ENCODE measurements at regions of chr13 and their contacts with region 1.

Region 1: GRCh38 chr13:108155185-108156106 is 59.9 kb downstream of the LIG4 start:
- DNase-seq: peak in 2 of 3 donors; percentile 40 to 61
- ATAC-seq: peak; percentile 61 to 77 (median 72)
- H3K4me3 ChIP-seq: no peak overlapping the region
- H3K27ac ChIP-seq: peak overlapping the region in 2 of 3 donors; percentile 7 to 61
- H3K4me1 ChIP-seq: peaks cover 0 to 16% (median 5%) of the 10 kb centered on the region in 4 donors
- H3K27me3 ChIP-seq: no peaks in the 10 kb centered on the region
- CTCF ChIP-seq: peak; percentile 83 to 93 (median 87)
- POLR2A ChIP-seq: no peak

Region 2: DNA sequence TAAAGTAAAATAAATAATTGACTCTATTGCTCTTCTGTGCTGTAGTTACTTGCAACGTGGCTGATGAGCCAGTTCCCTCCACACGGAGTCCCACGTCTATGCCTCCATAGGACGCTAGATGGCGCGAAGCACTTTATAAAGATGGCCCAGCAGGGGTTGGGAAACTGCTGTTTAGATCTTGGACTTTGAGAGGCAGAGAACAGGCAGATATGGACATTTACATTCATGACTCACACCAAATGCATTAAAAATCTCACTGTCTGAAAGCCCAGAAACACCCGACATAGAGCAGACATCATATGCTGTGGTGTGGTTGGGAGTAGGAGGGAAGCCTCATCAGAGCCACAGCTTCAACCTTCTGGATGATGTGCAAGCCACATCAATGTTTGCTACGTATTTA is 944.4 kb before region 1 on chr13:
- intact Hi-C with region 1: loop called in 1 of 2 experiments (anchors 10 kb)
- DNase-seq: peak; percentile 63 to 72 (median 70)
- ATAC-seq: peak; percentile 96 to 99 (median 98)
- H3K4me3 ChIP-seq: no peak overlapping the region
- H3K27ac ChIP-seq: no peak overlapping the region
- H3K4me1 ChIP-seq: no peaks in the 10 kb centered on the region
- H3K27me3 ChIP-seq: no peaks in the 10 kb centered on the region
- CTCF ChIP-seq: peak; percentile 78 to 89 (median 87)
- POLR2A ChIP-seq: no peak

Region 3: DNA sequence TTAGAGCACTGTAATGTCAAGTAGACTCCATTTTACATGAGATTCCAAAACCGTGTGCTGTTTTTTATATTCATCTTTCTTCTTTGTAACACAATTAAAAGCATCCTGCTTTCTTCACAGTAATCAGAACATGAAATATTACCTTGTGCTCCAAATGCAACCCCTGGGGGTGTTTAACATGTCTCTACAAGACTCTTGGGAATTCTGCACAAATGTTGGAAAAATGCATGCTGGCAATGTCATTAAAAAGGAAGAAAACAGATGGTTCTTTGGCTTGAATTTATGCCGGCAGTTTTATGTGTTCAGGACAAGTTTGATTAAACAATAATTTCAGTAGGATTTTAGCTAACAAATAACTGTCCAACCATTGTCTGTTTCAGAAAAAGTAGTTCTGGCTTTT is 99.2 kb before region 1 on chr13:
- intact Hi-C with region 1: no loop called
- DNase-seq: no peak
- ATAC-seq: no peak
- H3K4me3 ChIP-seq: no peak overlapping the region
- H3K27ac ChIP-seq: no peak overlapping the region
- H3K4me1 ChIP-seq: no peaks in the 10 kb centered on the region
- H3K27me3 ChIP-seq: no peaks in the 10 kb centered on the region
- CTCF ChIP-seq: no peak
- POLR2A ChIP-seq: no peak

Region 4: GRCh38 chr13:108425056-108425455 is 269.6 kb after region 1 on chr13:
- intact Hi-C with region 1: no loop called
- DNase-seq: no peak
- ATAC-seq: no peak
- H3K4me3 ChIP-seq: no peak overlapping the region
- H3K27ac ChIP-seq: no peak overlapping the region
- H3K4me1 ChIP-seq: no peaks in the 10 kb centered on the region
- H3K27me3 ChIP-seq: no peaks in the 10 kb centered on the region
- CTCF ChIP-seq: no peak
- POLR2A ChIP-seq: no peak

Measured in right lobe of liver (tissue), 6 donors.